ENCODE measurements at regions of chr3 and their contacts with region 1.

Region 1: DNA sequence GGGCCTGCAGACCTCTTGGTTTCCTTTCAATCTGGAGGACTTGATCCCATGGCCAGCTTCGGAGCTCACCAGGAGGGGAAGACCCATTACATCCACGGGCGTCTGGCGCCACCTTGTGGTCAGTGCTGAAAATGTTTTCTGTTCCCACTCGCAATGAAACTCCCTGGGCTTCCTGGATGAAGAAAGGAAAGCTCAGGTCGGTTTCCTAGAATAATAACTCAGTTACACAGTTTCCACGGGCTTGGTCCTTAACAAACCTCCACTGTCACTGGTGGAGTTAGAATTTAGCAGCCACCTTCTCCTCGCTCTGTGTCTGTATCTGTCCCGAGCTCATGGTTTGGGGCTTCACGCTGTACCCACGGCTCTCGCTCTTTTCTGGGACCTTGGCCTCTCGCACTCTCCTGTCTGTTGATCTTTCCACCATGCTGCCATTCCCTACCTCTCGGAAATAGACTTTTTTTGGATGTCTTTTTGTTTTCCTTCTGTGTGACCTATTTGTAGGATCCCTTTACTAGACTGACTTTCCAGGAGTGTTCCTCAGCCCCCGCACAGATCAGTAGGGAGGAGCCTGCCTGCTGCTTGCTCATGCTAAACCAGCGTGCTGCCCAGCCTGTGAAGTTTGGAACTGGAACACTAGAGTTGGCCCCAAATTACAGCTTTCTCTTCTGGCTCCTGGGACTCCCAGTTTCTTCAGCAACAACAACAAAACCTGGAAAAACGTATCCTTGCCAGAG is 56.3 kb downstream of the IL20RB start:
- DNase-seq: no peak
- H3K4me3 ChIP-seq: peak overlapping the region; percentile 38
- H3K27me3 ChIP-seq: no peaks in the 10 kb centered on the region
- CTCF ChIP-seq: peak; percentile 75

Region 2: GRCh38 chr3:136075218-136075808 is 938.8 kb before region 1 on chr3:
- CTCF ChIA-PET with region 1: interaction called, 12 read pairs
- POLR2A ChIA-PET with region 1: no interaction called
- DNase-seq: no peak
- H3K4me3 ChIP-seq: no peak overlapping the region
- H3K27me3 ChIP-seq: no peaks in the 10 kb centered on the region
- CTCF ChIP-seq: peak; percentile 84

Region 3: GRCh38 chr3:136772709-136773108 is 241.4 kb before region 1 on chr3:
- CTCF ChIA-PET with region 1: interaction called, 12 read pairs
- POLR2A ChIA-PET with region 1: no interaction called
- DNase-seq: no peak
- H3K4me3 ChIP-seq: no peak overlapping the region
- H3K27me3 ChIP-seq: no peaks in the 10 kb centered on the region
- CTCF ChIP-seq: no peak

Region 4: DNA sequence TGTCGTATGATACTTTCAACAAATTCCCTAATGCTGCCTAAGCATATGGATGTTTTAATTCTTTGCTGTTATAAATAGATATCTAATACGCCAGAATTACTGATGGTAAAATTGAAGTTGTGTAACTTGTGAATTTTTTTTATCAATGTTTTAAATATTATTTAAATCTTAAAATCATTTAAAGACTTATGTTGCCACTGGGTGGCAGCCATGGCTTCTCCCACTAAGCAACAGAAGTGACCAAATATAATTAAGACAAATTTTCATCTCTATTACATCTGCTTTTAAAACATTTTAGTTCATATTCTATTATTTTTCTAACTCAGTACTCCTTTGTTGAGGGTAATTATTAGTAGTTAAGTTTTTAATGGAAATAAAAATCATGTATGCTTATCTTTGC is 64.4 kb before region 1 on chr3:
- CTCF ChIA-PET with region 1: interaction called, 29 read pairs
- POLR2A ChIA-PET with region 1: no interaction called
- DNase-seq: no peak
- H3K4me3 ChIP-seq: no peak overlapping the region
- H3K27me3 ChIP-seq: no peaks in the 10 kb centered on the region
- CTCF ChIP-seq: peak; percentile 29; the same call in 1 of the 2 replicates

Region 5: GRCh38 chr3:137460944-137461343 is 446.8 kb after region 1 on chr3:
- CTCF ChIA-PET with region 1: no interaction called
- POLR2A ChIA-PET with region 1: no interaction called
- DNase-seq: no peak
- H3K4me3 ChIP-seq: no peak overlapping the region
- H3K27me3 ChIP-seq: no peaks in the 10 kb centered on the region
- CTCF ChIP-seq: no peak